Activated B cell treated with CpG ODN at 0.5 μM for 24 hours (primary cell): ENCODE measurements at regions of chr18 and their contacts with region 1.

Region 1: GRCh38 chr18:27599202-27599829 is 414.2 kb upstream of the CHST9 start:
- DNase-seq: no peak
- ATAC-seq: no peak
- H3K4me3 Mint-ChIP-seq: no peak overlapping the region
- H3K27ac Mint-ChIP-seq: no peak overlapping the region
- H3K4me1 Mint-ChIP-seq: no peaks in the 10 kb centered on the region
- H3K27me3 Mint-ChIP-seq: no peaks in the 10 kb centered on the region
- CTCF ChIP-seq: no peak

Region 2: GRCh38 chr18:25921677-25922421 is 1677.5 kb before region 1 on chr18:
- CTCF ChIA-PET with region 1: no interaction called
- POLR2A ChIA-PET with region 1: no interaction called
- intact Hi-C with region 1: loop called (anchors 5 kb)
- DNase-seq: peak; percentile 23
- ATAC-seq: peak; percentile 57
- H3K4me3 Mint-ChIP-seq: no peak overlapping the region
- H3K27ac Mint-ChIP-seq: no peak overlapping the region
- H3K4me1 Mint-ChIP-seq: peaks cover 2% of the 10 kb centered on the region
- H3K27me3 Mint-ChIP-seq: peaks cover 5% of the 10 kb centered on the region
- CTCF ChIP-seq: no peak

Region 3: DNA sequence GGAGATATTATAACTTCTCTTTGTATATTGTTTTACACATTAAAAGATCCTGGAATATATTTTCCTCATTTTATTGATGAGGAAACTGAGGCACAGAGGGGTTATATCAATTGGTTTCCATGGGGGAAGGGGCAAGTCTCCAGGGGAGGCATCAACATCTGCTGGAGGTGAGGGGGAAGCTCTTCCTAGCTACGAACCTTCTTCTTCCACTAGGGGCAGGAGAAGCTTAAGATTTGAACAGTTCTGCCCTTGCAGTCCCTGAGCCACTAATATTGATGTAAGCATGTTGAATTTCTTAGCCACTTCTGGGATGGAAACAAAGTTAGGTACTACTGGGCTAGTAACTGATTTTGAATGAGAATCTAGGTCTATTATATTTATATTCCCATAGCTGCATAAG is 593.7 kb before region 1 on chr18:
- CTCF ChIA-PET with region 1: no interaction called
- POLR2A ChIA-PET with region 1: no interaction called
- intact Hi-C with region 1: loop called (anchors 5 kb)
- DNase-seq: no peak
- ATAC-seq: no peak
- H3K4me3 Mint-ChIP-seq: no peak overlapping the region
- H3K27ac Mint-ChIP-seq: no peak overlapping the region
- H3K4me1 Mint-ChIP-seq: no peaks in the 10 kb centered on the region
- H3K27me3 Mint-ChIP-seq: peaks cover 4% of the 10 kb centered on the region
- CTCF ChIP-seq: no peak